Activated naive CD4-positive, alpha-beta T cell treated with anti-CD3 and anti-CD28 coated beads for 36 hours (primary cell): ENCODE measurements at regions of chr22 and their contacts with region 1.

Region 1: DNA sequence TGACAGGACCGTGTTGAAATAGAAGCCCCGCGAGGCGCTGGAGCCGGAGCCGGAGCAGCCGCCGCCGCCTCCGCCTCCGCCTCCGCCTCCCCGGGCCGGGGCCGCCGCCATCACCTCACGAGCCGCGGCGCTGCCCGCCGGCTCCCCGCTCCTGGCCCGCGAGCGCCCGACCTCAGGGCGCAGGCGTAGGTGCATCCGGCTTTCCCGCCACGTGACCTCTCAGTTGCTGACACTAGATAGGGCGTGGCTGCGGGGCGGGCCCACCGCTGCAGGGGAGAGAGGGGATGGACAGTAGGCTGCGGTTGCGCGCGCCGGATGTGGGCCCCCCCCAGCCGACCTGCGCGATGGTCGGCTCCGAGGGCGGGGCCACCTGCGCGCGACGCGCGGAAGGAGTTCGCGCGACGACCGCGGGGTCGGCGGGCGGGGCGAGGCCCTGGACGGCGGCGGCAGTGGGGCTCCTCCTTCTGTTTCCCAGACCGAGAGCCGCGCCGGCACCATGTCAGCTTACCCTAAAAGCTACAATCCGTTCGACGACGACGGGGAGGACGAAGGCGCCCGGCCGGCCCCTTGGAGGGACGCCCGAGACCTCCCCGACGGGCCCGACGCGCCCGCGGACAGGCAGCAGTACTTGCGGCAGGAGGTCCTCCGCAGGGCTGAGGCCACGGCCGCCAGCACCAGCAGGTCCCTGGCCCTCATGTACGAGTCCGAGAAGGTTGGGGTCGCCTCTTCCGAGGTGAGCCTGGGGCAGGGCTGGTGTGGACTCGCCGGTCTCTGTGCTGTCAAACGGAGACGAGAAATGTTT is at the starts of genes PI4KA and SNAP29:
- DNase-seq: peak; percentile 99
- H3K4me3 Mint-ChIP-seq: peak within 1 kb of the TSS; percentile 90
- H3K27ac Mint-ChIP-seq: peak within 1 kb of the TSS; percentile 77
- H3K4me1 Mint-ChIP-seq: peaks cover 46% of the 10 kb centered on the region
- H3K27me3 Mint-ChIP-seq: no peaks in the 10 kb centered on the region
- total RNA-seq, gene PI4KA: 55.0 to 63.7 TPM
- total RNA-seq, gene SNAP29: 22.1 to 24.2 TPM

Region 2: GRCh38 chr22:20550821-20551744 is 307.7 kb before region 1 on chr22:
- CTCF ChIA-PET with region 1: no interaction called
- intact Hi-C with region 1: loop called (anchors 5 kb)
- DNase-seq: peak; percentile 87
- H3K4me3 Mint-ChIP-seq: peak overlapping the region; percentile 70
- H3K27ac Mint-ChIP-seq: peak overlapping the region; percentile 100
- H3K4me1 Mint-ChIP-seq: peaks cover 93% of the 10 kb centered on the region
- H3K27me3 Mint-ChIP-seq: no peaks in the 10 kb centered on the region

Region 3: GRCh38 chr22:20816559-20816958 is 42.3 kb before region 1 on chr22:
- CTCF ChIA-PET with region 1: no interaction called
- intact Hi-C with region 1: loop called (anchors 5 kb)
- DNase-seq: no peak
- H3K4me3 Mint-ChIP-seq: no peak overlapping the region
- H3K27ac Mint-ChIP-seq: no peak overlapping the region
- H3K4me1 Mint-ChIP-seq: peaks cover under 1% of the 10 kb centered on the region
- H3K27me3 Mint-ChIP-seq: no peaks in the 10 kb centered on the region

Region 4: DNA sequence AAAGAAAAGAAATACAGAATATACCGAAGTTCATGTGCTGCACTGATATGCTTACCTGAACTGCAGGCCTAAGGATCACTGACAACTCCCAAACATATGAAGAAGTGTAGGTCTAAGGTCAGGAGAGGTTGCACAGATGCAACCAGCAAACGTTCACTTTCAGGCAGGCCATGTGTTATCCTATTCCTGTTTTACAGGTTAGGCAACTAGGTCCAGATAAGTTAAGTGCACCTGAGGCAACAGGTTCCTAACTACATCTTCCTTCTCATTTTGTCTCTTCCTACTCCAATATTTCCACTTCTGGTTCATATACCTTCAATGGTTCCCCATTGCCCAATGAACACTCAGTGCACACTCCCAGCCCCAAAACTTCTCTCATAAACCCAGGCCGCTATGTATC is 15.3 kb before region 1 on chr22:
- CTCF ChIA-PET with region 1: no interaction called
- intact Hi-C with region 1: loop called (anchors 2 kb)
- DNase-seq: no peak
- H3K4me3 Mint-ChIP-seq: no peak overlapping the region
- H3K27ac Mint-ChIP-seq: no peak overlapping the region
- H3K4me1 Mint-ChIP-seq: peaks cover 45% of the 10 kb centered on the region
- H3K27me3 Mint-ChIP-seq: no peaks in the 10 kb centered on the region

Region 5: GRCh38 chr22:20916983-20917810 is 58.4 kb after region 1 on chr22 and contains the start of gene CRKL:
- CTCF ChIA-PET with region 1: no interaction called
- intact Hi-C with region 1: loop called (anchors 1 kb)
- DNase-seq: peak; percentile 97
- H3K4me3 Mint-ChIP-seq: peak within 1 kb of the TSS; percentile 98
- H3K27ac Mint-ChIP-seq: peak within 1 kb of the TSS; percentile 86
- H3K4me1 Mint-ChIP-seq: peaks cover 28% of the 10 kb centered on the region
- H3K27me3 Mint-ChIP-seq: no peaks in the 10 kb centered on the region
- total RNA-seq, gene CRKL: 60.5 to 62.2 TPM

Region 6: GRCh38 chr22:20940186-20940651 is 81.4 kb after region 1 on chr22:
- CTCF ChIA-PET with region 1: no interaction called
- intact Hi-C with region 1: no loop called
- DNase-seq: no peak
- H3K4me3 Mint-ChIP-seq: no peak overlapping the region
- H3K27ac Mint-ChIP-seq: no peak overlapping the region
- H3K4me1 Mint-ChIP-seq: peaks cover 72% of the 10 kb centered on the region
- H3K27me3 Mint-ChIP-seq: no peaks in the 10 kb centered on the region

Region 7: DNA sequence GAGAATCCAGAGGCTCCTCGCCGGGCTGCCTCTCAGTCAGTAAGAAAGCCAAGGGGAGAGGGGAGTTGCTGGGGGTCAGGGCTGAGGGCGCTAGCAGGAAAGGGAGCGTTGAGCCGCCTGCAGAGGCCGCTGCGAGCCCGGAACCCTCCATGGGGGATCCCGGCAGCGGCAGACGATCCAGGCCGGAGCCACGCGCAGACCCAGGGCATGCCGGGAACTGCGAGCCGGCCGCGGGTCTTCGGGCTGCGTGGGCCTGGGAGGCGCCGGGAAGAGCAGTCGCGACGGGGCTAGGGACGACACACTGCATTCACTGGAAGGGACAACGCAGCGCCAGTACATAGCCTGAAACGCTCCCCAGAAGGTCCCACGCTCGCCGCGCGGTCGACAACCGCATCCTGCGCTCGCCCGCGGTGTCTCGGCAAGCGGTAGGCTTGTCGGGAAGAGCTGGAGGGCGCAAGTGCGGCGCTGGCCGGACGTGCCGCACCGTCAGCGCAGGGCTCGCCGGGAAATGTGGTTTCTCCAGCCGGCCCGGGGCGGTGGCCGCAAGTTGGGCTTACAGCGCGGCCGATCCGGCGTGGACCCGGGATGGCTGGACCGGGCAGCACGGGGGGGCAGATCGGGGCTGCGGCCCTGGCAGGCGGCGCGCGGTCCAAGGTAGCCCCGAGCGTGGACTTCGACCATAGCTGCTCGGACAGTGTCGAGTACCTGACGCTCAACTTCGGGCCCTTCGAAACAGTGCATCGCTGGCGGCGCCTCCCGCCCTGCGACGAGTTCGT is 123.2 kb after region 1 on chr22 and contains the start of gene LZTR1:
- CTCF ChIA-PET with region 1: no interaction called
- intact Hi-C with region 1: loop called (anchors 1 kb)
- DNase-seq: peak; percentile 80
- H3K4me3 Mint-ChIP-seq: peak within 1 kb of the TSS; percentile 97
- H3K27ac Mint-ChIP-seq: peak within 1 kb of the TSS; percentile 87
- H3K4me1 Mint-ChIP-seq: peaks cover 41% of the 10 kb centered on the region
- H3K27me3 Mint-ChIP-seq: no peaks in the 10 kb centered on the region
- total RNA-seq, gene LZTR1: 23.1 to 27.4 TPM